Activated T-helper 1 cell treated with anti-CD3 and anti-CD28 coated beads, Interleukin-12 subunit alpha, Interleukin-12 subunit beta, Interleukin-2, Interleukin-4 antibody, amounts not matched to agents 30 ng/mL and 10 ng/mL and 1 ng/mL, durations not matched to agents 14 hours and 24 hours and 36 hours (primary cell): ENCODE measurements at regions of chr10 and their contacts with region 1.

Region 1: DNA sequence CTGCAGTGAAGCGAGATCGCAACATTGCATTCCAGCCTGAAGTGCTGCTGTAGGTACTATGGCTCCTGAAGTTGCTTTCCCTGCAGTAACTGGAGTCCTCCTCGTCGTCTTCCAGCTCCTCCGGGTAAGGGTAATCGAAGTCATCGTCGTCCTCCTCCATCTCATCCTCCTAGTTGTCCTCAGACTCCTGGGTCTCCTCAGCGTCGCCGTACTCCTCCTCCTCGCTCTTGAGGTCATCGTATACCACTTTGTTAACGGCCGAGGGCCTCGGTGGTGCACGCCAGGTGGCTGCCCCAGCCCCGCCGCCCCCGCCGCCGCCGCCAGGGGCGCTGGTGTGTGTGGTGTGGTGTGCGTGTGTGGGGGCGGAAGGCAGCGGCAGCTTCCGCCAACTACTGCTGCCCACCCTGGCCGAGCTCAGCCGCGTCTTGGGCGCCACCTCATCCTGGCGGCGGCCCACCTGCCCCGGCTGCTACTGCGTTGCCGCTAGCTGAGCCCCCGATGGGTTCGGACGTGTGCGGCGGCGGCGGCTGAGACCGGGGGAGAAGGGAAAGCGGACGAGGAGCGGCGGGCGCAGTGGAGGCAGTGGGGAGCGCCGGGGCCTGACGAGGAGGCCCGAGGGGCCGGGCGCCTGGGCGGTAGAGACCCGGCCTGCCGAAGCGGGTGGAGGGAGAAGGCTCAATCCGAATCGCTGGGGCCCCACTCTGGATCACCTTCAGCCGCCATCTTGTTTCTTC is 11.8 kb upstream of the ACBD5 start:
- DNase-seq: peak; percentile 75
- H3K4me3 Mint-ChIP-seq: peak overlapping the region; percentile 78
- H3K27ac Mint-ChIP-seq: peak overlapping the region; percentile 49
- H3K4me1 Mint-ChIP-seq: peaks cover 11% of the 10 kb centered on the region
- H3K27me3 Mint-ChIP-seq: peaks cover 6% of the 10 kb centered on the region

Region 2: GRCh38 chr10:27223964-27224363 is 28.5 kb before region 1 on chr10:
- intact Hi-C with region 1: loop called (anchors 1 kb)
- DNase-seq: no peak
- H3K4me3 Mint-ChIP-seq: no peak overlapping the region
- H3K27ac Mint-ChIP-seq: peak overlapping the region; percentile 34
- H3K4me1 Mint-ChIP-seq: peaks cover 11% of the 10 kb centered on the region
- H3K27me3 Mint-ChIP-seq: no peaks in the 10 kb centered on the region

Region 3: GRCh38 chr10:27297839-27298521 is 45.5 kb after region 1 on chr10:
- intact Hi-C with region 1: no loop called
- DNase-seq: no peak
- H3K4me3 Mint-ChIP-seq: no peak overlapping the region
- H3K27ac Mint-ChIP-seq: no peak overlapping the region
- H3K4me1 Mint-ChIP-seq: peaks cover 10% of the 10 kb centered on the region
- H3K27me3 Mint-ChIP-seq: peaks cover 11% of the 10 kb centered on the region